ENCODE measurements at regions of chr12 and their contacts with region 1.

Region 1: DNA sequence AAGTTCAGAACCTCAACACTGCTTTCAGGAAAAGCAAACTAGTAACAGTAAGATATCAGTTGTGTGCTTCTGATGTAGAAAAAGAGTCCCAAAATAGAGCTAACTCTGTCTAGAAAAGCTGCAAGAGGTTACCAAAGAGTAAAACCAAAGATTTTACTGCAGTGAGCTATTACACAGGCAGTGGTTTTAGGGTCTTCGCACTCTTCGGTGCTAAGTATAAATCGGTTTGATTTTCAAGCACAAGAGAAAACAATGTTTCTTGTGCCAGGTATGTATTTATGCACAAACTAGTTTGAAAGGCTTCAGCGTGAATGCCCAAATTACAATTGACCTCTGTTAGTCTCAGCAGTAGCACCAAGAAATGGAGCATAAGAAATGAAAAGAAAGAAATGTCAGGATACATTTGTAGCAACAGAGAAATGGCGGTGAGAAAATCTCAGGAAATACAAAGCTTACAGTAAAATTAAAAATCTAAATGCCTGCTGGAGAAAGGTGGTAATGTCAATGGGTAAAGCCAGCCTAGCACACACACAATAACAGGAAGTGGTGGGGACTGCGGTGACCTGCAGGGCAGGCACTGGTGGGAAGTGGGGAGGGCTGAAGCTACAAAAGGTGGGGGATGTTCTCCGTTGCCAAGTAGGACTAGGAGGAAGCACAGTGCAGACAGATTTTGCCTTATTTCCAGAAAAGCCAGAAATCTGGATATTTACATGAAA is 18.0 kb upstream of the DYRK2 start:
- DNase-seq: peak; percentile 67 to 98 (median 86)
- ATAC-seq: peak; percentile 99
- H3K4me3 ChIP-seq: peak overlapping the region; percentile 19
- H3K4me3 Mint-ChIP-seq: peak overlapping the region; percentile 73
- H3K27ac ChIP-seq: peak overlapping the region; percentile 69 to 77
- H3K27ac Mint-ChIP-seq: peak overlapping the region; percentile 90
- H3K4me1 ChIP-seq: peaks cover 44% of the 10 kb centered on the region
- H3K4me1 Mint-ChIP-seq: peaks cover 91% of the 10 kb centered on the region
- H3K27me3 ChIP-seq: no peaks in the 10 kb centered on the region
- H3K27me3 Mint-ChIP-seq: no peaks in the 10 kb centered on the region
- CTCF ChIP-seq: no peak

Region 2: GRCh38 chr12:67344979-67345710 is 285.4 kb before region 1 on chr12:
- CTCF ChIA-PET with region 1: no interaction called
- POLR2A ChIA-PET with region 1: no interaction called
- intact Hi-C with region 1: no loop called
- DNase-seq: no peak
- ATAC-seq: no peak
- H3K4me3 ChIP-seq: no peak overlapping the region
- H3K4me3 Mint-ChIP-seq: no peak overlapping the region
- H3K27ac ChIP-seq: no peak overlapping the region
- H3K27ac Mint-ChIP-seq: no peak overlapping the region
- H3K4me1 ChIP-seq: no peaks in the 10 kb centered on the region
- H3K4me1 Mint-ChIP-seq: no peaks in the 10 kb centered on the region
- H3K27me3 ChIP-seq: no peaks in the 10 kb centered on the region
- H3K27me3 Mint-ChIP-seq: no peaks in the 10 kb centered on the region
- CTCF ChIP-seq: no peak

Region 3: GRCh38 chr12:67482751-67483671 is 147.5 kb before region 1 on chr12:
- CTCF ChIA-PET with region 1: interaction called, 6 read pairs
- POLR2A ChIA-PET with region 1: interaction called, 34 read pairs
- intact Hi-C with region 1: loop called in 1 of 2 experiments (anchors 5 kb)
- DNase-seq: peak; percentile 58 to 95 (median 84)
- ATAC-seq: peak; percentile 92
- H3K4me3 ChIP-seq: no peak overlapping the region
- H3K4me3 Mint-ChIP-seq: peak overlapping the region; percentile 23
- H3K27ac ChIP-seq: peak overlapping the region; percentile 3 to 66
- H3K27ac Mint-ChIP-seq: peak overlapping the region; percentile 84
- H3K4me1 ChIP-seq: peaks cover 47% of the 10 kb centered on the region
- H3K4me1 Mint-ChIP-seq: peaks cover 52% of the 10 kb centered on the region
- H3K27me3 ChIP-seq: no peaks in the 10 kb centered on the region
- H3K27me3 Mint-ChIP-seq: no peaks in the 10 kb centered on the region
- CTCF ChIP-seq: no peak

Region 4: GRCh38 chr12:67558775-67559174 is 71.8 kb before region 1 on chr12:
- CTCF ChIA-PET with region 1: interaction called, 3 read pairs
- POLR2A ChIA-PET with region 1: interaction called, 16 read pairs
- intact Hi-C with region 1: no loop called
- DNase-seq: no peak
- ATAC-seq: no peak
- H3K4me3 ChIP-seq: no peak overlapping the region
- H3K4me3 Mint-ChIP-seq: no peak overlapping the region
- H3K27ac ChIP-seq: no peak overlapping the region
- H3K27ac Mint-ChIP-seq: no peak overlapping the region
- H3K4me1 ChIP-seq: peaks cover 18% of the 10 kb centered on the region
- H3K4me1 Mint-ChIP-seq: no peaks in the 10 kb centered on the region
- H3K27me3 ChIP-seq: no peaks in the 10 kb centered on the region
- H3K27me3 Mint-ChIP-seq: no peaks in the 10 kb centered on the region
- CTCF ChIP-seq: no peak

Region 5: GRCh38 chr12:67592216-67593011 is 38.1 kb before region 1 on chr12:
- CTCF ChIA-PET with region 1: interaction called, 10 read pairs
- POLR2A ChIA-PET with region 1: interaction called, 29 read pairs
- intact Hi-C with region 1: loop called (anchors 1 to 2 kb)
- DNase-seq: peak in 4 of 14 experiments; percentile 15 to 85 (median 48)
- ATAC-seq: no peak
- H3K4me3 ChIP-seq: no peak overlapping the region
- H3K4me3 Mint-ChIP-seq: peak overlapping the region; percentile 32
- H3K27ac ChIP-seq: peak overlapping the region in 1 of 2 donors; percentile 35
- H3K27ac Mint-ChIP-seq: peak overlapping the region; percentile 60
- H3K4me1 ChIP-seq: peaks cover 40% of the 10 kb centered on the region
- H3K4me1 Mint-ChIP-seq: peaks cover 68% of the 10 kb centered on the region
- H3K27me3 ChIP-seq: no peaks in the 10 kb centered on the region
- H3K27me3 Mint-ChIP-seq: no peaks in the 10 kb centered on the region
- CTCF ChIP-seq: no peak

Region 6: DNA sequence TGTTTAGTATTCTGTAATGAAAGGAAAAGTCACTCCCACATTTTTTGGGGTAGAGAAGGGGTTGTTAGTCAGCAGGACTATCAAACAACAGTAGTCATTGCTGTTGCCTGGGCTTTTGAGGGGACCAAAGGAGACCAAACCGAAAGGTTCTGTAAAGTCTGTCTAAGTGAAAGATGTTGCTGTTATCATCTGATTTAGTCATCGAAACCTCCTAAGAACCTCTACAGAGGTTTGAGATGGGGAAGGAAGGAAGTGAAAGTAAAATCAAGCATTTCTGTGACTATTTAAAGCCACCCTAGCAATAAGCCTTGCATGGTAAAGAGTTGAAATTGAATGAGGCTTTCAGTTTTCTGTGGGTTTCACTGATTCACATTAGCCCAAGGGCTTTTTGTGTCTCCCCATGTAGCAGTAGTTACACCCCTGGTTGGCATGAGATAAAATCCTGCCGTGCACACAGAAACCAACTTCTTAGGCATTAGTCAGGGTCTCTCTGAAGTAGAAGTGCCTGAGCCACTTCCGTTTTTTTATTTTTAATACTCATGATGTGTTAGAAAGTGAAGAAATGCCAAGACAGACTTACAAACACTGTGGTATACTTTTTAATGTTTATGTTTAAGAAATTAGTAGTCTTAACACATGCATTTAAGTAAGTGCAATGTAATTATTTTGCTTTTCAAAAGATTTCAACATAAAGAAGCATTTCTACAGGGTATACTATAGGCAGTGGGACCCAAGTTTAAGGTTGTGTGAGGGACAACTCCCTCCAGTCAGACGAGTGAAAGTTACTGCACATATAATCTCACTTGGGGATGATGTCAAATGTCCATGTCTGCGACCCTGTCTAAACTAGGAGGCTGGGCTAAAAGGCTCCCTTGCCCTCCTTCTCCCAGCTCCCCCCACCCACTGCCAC is 68.4 kb after region 1 on chr12:
- CTCF ChIA-PET with region 1: interaction called, 3 read pairs
- POLR2A ChIA-PET with region 1: no interaction called
- intact Hi-C with region 1: loop called in 1 of 2 experiments (anchors 2 kb)
- DNase-seq: peak in 13 of 14 experiments; percentile 19 to 72 (median 40)
- ATAC-seq: peak; percentile 79
- H3K4me3 ChIP-seq: peak overlapping the region; percentile 49
- H3K4me3 Mint-ChIP-seq: peak overlapping the region; percentile 85
- H3K27ac ChIP-seq: peak overlapping the region; percentile 30 to 56
- H3K27ac Mint-ChIP-seq: peak overlapping the region; percentile 85
- H3K4me1 ChIP-seq: peaks cover 31% of the 10 kb centered on the region
- H3K4me1 Mint-ChIP-seq: peaks cover 65% of the 10 kb centered on the region
- H3K27me3 ChIP-seq: no peaks in the 10 kb centered on the region
- H3K27me3 Mint-ChIP-seq: no peaks in the 10 kb centered on the region
- CTCF ChIP-seq: no peak

Measured in CD4-positive, alpha-beta T cell (primary cell).